ENCODE measurements at regions of chr2 and their contacts with region 1.

Region 1: DNA sequence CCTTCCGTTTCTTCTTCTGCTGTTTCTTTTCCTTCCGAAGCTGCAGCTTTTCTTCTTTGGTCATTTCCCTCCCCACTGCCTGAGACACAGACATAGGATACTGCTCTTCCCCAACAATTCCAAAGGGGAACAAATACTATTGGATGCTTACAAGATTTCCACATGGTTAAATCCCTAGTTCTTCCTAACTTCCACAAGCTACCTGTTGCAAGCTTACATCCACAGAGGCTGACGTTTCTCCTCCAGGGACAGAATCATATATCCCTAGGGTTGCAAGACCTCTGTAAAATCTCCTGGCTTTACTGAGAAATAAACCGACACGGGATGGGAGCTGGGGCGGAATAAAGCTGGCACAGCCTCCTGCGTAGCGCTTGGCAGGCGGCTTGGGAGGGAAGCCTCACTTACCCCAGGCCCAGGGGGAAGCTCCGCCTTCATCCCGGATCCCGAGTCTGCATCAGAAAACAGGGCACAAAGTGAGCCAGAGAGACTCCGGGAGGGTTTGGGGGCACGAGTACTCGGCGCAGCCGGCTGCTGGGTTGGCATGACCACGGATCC is 590 bp downstream of the EIF2B4 start:
- DNase-seq: peak; percentile 82
- ATAC-seq: peak; percentile 45 to 62

Region 2: GRCh38 chr2:26978061-26978596 is 391.4 kb before region 1 on chr2:
- intact Hi-C with region 1: no loop called
- DNase-seq: peak; percentile 42
- ATAC-seq: peak; percentile 42 to 54

Region 3: GRCh38 chr2:27322766-27323595 is 46.6 kb before region 1 on chr2 and contains the start of gene MPV17:
- intact Hi-C with region 1: loop called in 1 of 2 experiments (anchors 5 kb)
- DNase-seq: peak; percentile 95
- ATAC-seq: peak; percentile 94 to 98
- total RNA-seq, gene MPV17: 52.7 to 60.9 TPM